Transverse colon (tissue), 4 donors: ENCODE measurements at regions of chr4 and their contacts with region 1.

Region 1: GRCh38 chr4:7067452-7068278 is at the start of gene GRPEL1:
- DNase-seq: peak; percentile 100
- H3K4me3 ChIP-seq: peak within 1 kb of the TSS; percentile 79 to 92 (median 85)
- H3K27ac ChIP-seq: peak within 1 kb of the TSS; percentile 88 to 96 (median 92)
- H3K4me1 ChIP-seq: peaks cover 18 to 32% (median 22%) of the 10 kb centered on the region in 4 donors
- H3K27me3 ChIP-seq: no peaks in the 10 kb centered on the region
- CTCF ChIP-seq: no peak
- EP300 ChIP-seq: no peak
- POLR2A ChIP-seq: peak; percentile 98
- total RNA-seq, gene GRPEL1: 1.1 to 22.0 (median 12.5) TPM

Region 2: DNA sequence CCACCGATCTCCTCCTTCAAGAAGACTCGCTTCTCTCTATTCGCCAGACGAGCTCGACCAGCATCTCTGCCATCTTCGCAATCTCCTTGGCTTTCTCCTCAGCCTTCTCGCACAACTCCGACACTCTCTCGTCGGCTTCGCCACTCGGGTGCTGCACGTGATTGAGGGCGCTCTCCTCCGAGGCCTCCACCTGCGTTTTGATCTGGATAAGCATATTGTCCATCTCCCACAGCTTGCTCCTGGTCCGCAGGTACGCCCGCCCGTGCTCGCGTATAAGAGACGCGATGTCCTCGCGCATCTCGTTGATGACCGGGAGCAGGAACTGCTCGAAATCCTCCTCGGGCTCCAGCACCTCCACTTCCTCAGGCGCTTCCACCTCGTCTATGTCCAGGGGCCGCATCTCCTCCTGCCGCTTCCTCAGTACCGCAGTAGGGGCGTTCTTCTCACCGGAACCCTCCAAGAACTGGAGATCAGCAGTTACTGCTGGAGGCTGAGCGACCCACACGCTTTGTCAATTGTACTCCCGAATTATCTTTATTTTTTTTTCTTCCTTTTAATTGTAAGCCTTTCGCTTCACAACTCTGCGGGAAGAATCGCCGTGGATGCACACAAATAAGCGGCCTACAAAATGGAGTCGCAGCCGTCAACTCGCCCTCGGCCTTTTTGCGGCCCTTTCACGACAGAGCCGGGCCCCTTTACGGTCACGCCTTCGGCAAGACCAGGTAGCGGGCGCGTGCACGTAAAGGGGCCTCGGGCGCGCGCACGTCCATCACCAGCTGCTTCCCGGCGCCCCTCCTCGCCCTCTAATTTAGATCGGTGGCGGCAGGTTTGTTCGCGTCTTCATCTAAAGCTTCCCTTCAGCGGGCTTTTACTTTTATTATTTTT is 358.2 kb before region 1 on chr4 and contains the start of gene MRFAP1L1:
- in situ Hi-C with region 1: loop called in 2 of 4 experiments (anchors 10 to 25 kb)
- intact Hi-C with region 1: no loop called
- DNase-seq: peak; percentile 97
- H3K4me3 ChIP-seq: peak within 1 kb of the TSS; percentile 60 to 82 (median 74)
- H3K27ac ChIP-seq: peak within 1 kb of the TSS; percentile 83 to 92 (median 90)
- H3K4me1 ChIP-seq: peaks cover 25 to 42% (median 29%) of the 10 kb centered on the region in 4 donors
- H3K27me3 ChIP-seq: no peaks in the 10 kb centered on the region
- CTCF ChIP-seq: peak in 2 of 5 experiments; percentile 20 to 22
- EP300 ChIP-seq: no peak
- POLR2A ChIP-seq: peak; percentile 44
- total RNA-seq, gene MRFAP1L1: 18.3 to 51.0 (median 30.3) TPM

Region 3: GRCh38 chr4:6732441-6733357 is 335.0 kb before region 1 on chr4:
- in situ Hi-C with region 1: loop called in 2 of 4 experiments (anchors 10 to 25 kb)
- intact Hi-C with region 1: no loop called
- DNase-seq: peak; percentile 68
- H3K4me3 ChIP-seq: no peak overlapping the region
- H3K27ac ChIP-seq: peak overlapping the region in 3 of 4 donors; percentile 14 to 63 (median 41)
- H3K4me1 ChIP-seq: peaks cover 0 to 11% (median 9%) of the 10 kb centered on the region in 4 donors
- H3K27me3 ChIP-seq: no peaks in the 10 kb centered on the region
- CTCF ChIP-seq: no peak
- EP300 ChIP-seq: no peak
- POLR2A ChIP-seq: no peak

Region 4: GRCh38 chr4:6834867-6835266 is 232.8 kb before region 1 on chr4:
- in situ Hi-C with region 1: no loop called
- intact Hi-C with region 1: no loop called
- DNase-seq: no peak
- H3K4me3 ChIP-seq: no peak overlapping the region
- H3K27ac ChIP-seq: no peak overlapping the region
- H3K4me1 ChIP-seq: peaks cover 0 to 7% (median 2%) of the 10 kb centered on the region in 4 donors
- H3K27me3 ChIP-seq: no peaks in the 10 kb centered on the region
- CTCF ChIP-seq: no peak
- EP300 ChIP-seq: no peak
- POLR2A ChIP-seq: no peak

Region 5: DNA sequence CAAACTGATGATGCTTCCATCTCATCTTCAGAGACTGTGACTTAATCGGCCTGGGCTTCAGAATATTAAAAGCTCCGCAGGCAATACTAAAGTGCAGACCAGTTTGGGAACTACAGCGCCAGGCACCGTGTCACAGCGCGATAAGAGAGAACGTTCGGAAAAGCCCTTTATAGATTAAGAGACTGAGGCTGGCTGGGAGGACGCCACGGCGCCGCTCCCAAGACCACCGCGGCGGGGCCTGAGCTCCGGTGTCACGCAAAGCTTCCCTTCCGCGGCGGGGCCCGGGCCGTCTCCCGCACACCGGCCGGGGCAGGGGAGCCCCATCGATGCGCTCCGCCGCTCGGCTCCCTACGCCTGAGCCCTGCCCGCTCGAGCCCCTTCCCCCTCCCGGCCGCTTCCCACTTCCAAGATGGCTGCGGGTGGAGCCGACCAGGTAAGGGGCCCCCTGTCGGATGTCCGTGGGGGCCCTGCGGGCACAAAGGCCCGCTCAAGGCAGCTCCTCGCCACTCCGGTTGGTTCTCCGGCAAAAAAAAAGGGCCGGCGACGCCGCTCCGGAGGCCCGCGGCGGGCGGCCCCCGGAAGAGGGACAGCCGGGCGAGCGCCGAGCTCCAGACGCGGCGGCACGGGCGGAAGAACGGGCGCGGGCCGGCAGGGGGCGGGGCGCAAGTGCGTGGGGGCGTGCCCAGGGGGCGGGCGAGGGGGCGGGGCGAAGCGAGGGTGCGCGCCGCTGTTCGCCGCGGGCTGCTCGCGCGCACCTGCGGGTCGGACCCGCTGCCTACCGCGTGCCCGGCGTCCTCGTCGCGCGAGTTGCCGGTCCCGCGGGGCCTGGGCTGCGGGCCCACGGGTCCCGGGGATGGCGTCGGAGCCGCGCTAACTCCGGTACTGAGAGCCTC is 158.3 kb before region 1 on chr4 and contains the start of gene TBC1D14:
- in situ Hi-C with region 1: loop called in 3 of 4 experiments (anchors 10 kb)
- intact Hi-C with region 1: loop called (anchors 5 kb)
- DNase-seq: peak; percentile 91
- H3K4me3 ChIP-seq: peak within 1 kb of the TSS; percentile 75 to 91 (median 86)
- H3K27ac ChIP-seq: peak within 1 kb of the TSS; percentile 97 to 99 (median 99)
- H3K4me1 ChIP-seq: peaks cover 6 to 49% (median 34%) of the 10 kb centered on the region in 4 donors
- H3K27me3 ChIP-seq: peaks cover 3% of the 10 kb centered on the region
- CTCF ChIP-seq: peak in 3 of 5 experiments; percentile 8 to 44 (median 15)
- EP300 ChIP-seq: no peak
- POLR2A ChIP-seq: peak; percentile 62
- total RNA-seq, gene TBC1D14: 42.6 to 56.9 (median 54.0) TPM

Region 6: DNA sequence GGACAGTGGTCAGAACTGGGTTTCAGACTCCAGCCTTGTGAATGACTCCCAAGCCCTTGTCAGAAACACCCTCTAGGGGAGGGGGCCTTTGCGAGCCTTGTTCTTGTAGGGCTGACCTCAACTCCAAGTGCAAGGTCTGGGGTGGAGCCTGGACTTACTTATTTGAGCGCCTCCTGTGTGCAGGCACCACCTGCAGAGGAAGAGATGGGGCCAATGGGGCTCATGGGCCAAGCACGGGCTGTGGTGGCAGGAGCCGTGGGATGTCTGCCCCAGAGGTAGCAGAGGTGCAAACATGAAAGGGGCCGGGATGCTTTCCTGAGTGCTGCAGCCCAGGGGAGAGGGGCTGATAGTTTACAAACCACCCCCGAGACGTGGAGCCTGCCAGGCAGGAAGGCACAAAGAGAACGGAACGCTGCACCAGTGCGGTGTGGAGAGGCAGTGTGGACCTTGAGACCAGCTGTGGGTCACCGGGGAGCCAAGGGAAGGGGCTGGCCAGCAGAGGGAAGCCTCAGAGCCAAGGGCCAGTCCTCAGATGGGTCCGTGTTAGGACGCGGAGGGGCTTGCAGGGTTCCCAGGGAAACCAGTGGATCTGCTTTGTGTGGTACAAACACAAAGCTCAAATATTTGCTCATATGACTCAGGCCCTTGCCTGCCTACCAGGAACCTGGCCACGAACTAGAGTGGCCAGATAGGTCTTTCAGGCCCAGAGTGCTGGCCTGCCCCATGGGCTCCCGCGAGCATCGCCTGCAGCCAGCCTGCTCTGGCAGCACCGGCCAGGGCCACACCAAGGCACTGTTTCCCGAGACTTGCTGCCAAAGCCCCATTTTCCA is 33.2 kb before region 1 on chr4:
- in situ Hi-C with region 1: no loop called
- intact Hi-C with region 1: loop called (anchors 5 kb)
- DNase-seq: no peak
- H3K4me3 ChIP-seq: no peak overlapping the region
- H3K27ac ChIP-seq: no peak overlapping the region
- H3K4me1 ChIP-seq: no peaks in the 10 kb centered on the region
- H3K27me3 ChIP-seq: no peaks in the 10 kb centered on the region
- CTCF ChIP-seq: no peak
- EP300 ChIP-seq: no peak
- POLR2A ChIP-seq: no peak

Region 7: DNA sequence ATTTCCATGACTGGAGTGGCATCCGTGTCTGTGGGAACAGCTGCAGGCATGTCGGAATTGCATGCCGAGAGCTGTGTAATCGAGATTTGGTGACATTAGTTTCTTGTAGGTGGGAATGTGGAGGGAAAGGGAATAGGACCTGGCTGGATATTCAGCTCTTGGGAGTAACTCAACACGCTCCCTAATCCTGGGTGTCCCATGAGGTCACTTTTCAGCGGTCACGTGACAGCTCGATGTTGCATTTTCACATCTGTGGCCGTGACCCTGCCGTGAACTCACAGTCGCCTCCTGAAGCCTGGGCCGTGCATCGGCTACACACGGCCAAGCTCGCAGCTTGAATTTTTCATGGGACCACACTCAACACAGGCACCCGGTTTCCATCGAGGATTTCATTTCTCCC is 392.9 kb after region 1 on chr4:
- in situ Hi-C with region 1: no loop called
- intact Hi-C with region 1: no loop called
- DNase-seq: no peak
- H3K4me3 ChIP-seq: no peak overlapping the region
- H3K27ac ChIP-seq: no peak overlapping the region
- H3K4me1 ChIP-seq: no peaks in the 10 kb centered on the region
- H3K27me3 ChIP-seq: no peaks in the 10 kb centered on the region
- CTCF ChIP-seq: no peak
- EP300 ChIP-seq: no peak
- POLR2A ChIP-seq: no peak